CD4-positive, alpha-beta memory T cell (primary cell): ENCODE measurements at regions of chr5 and their contacts with region 1.

Region 1: DNA sequence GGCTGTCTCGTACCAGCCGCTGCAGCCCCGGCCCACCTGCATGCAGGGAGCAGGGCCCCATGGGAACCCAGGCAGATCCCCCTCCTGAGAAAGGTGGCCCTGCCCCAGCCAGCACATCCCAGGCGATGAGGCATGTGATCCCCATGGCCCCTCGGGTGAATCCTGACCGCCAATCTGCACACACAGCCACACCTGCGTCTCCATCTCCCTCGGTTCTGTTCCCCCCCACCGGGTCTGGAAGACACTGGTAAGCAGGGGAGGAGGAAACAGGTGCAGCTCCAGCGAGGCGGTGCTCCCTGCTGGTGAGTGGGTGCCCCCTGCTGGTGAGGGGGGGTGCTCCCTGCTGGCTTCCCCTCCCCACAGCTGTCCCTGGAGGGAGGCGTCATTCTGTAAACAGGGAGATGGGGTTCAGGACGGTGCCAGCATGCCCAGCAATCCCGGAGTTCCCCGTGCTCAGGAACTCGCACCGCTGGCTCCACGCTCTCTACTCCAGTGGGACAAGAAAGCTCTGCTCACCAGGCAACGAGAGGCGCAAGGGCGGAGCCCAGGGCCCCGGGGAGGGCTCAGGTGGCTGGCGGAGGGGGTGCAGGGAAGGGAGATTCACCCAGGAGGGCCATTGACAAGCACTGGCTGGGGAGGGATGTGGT is 28.4 kb upstream of the SLC12A7 start:
- DNase-seq: peak; percentile 69 to 85 (median 77)
- H3K4me3 ChIP-seq: no peak overlapping the region
- H3K4me3 Mint-ChIP-seq: no peak overlapping the region
- H3K27ac ChIP-seq: no peak overlapping the region
- H3K27ac Mint-ChIP-seq: peak overlapping the region in 2 of 7 donors; percentile 13 to 78
- H3K4me1 ChIP-seq: no peaks in the 10 kb centered on the region
- H3K4me1 Mint-ChIP-seq: peaks cover 0 to 7% (median 2%) of the 10 kb centered on the region in 4 donors
- H3K27me3 ChIP-seq: no peaks in the 10 kb centered on the region
- H3K27me3 Mint-ChIP-seq: peaks cover 4 to 7% of the 10 kb centered on the region in 2 donors

Region 2: DNA sequence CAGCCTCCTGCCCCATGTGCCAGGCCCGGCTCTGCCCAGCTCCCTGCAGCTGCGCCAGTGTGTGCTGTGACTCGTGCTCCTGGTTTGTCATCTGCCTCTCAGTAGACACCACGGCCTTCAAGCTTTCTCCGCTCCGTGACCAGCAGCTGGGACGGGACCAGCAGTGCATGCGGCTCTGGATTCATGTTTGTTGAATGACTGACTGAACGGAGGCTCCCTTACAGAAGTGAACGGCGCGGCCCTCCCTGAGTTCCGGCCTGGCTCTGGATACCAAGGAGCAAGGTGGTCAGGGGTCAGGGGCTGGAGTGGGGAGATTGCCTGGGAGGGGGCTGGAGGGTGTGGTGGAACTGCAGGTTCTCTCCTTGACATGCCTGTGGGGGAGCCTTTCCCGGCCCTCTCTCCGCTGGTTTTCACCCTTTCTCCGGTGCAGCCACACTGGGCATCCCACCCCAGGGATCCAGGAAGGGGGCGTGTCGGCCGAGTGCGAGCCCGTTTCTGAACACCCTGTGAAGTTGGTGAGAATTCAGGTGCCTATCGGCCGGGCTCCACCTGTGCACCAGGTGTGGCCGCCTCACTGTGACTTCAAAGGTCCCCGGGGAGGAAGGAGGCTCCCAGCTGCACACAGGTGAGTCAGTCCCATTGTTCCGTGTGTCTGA is 539.3 kb before region 1 on chr5:
- CTCF ChIA-PET with region 1: no interaction called
- POLR2A ChIA-PET with region 1: no interaction called
- intact Hi-C with region 1: no loop called
- DNase-seq: no peak
- H3K4me3 ChIP-seq: no peak overlapping the region
- H3K4me3 Mint-ChIP-seq: no peak overlapping the region
- H3K27ac ChIP-seq: no peak overlapping the region
- H3K27ac Mint-ChIP-seq: no peak overlapping the region
- H3K4me1 ChIP-seq: no peaks in the 10 kb centered on the region
- H3K4me1 Mint-ChIP-seq: peaks cover 5 to 6% (median 5%) of the 10 kb centered on the region in 4 donors
- H3K27me3 ChIP-seq: no peaks in the 10 kb centered on the region
- H3K27me3 Mint-ChIP-seq: peaks cover 10 to 23% of the 10 kb centered on the region in 2 donors

Region 3: GRCh38 chr5:923281-923873 is 216.9 kb before region 1 on chr5:
- CTCF ChIA-PET with region 1: interaction called, 45 read pairs
- POLR2A ChIA-PET with region 1: no interaction called
- intact Hi-C with region 1: no loop called
- DNase-seq: peak in 4 of 5 donors; percentile 47 to 61 (median 58)
- H3K4me3 ChIP-seq: no peak overlapping the region
- H3K4me3 Mint-ChIP-seq: no peak overlapping the region
- H3K27ac ChIP-seq: no peak overlapping the region
- H3K27ac Mint-ChIP-seq: peak overlapping the region in 1 of 7 donors; percentile 24
- H3K4me1 ChIP-seq: no peaks in the 10 kb centered on the region
- H3K4me1 Mint-ChIP-seq: peaks cover 0 to 5% (median 2%) of the 10 kb centered on the region in 4 donors
- H3K27me3 ChIP-seq: peaks cover 4% of the 10 kb centered on the region
- H3K27me3 Mint-ChIP-seq: peaks cover 15 to 26% of the 10 kb centered on the region in 2 donors

Region 4: GRCh38 chr5:989961-990530 is 150.2 kb before region 1 on chr5:
- CTCF ChIA-PET with region 1: interaction called, 13 read pairs
- POLR2A ChIA-PET with region 1: no interaction called
- intact Hi-C with region 1: no loop called
- DNase-seq: no peak
- H3K4me3 ChIP-seq: no peak overlapping the region
- H3K4me3 Mint-ChIP-seq: no peak overlapping the region
- H3K27ac ChIP-seq: no peak overlapping the region
- H3K27ac Mint-ChIP-seq: no peak overlapping the region
- H3K4me1 ChIP-seq: no peaks in the 10 kb centered on the region
- H3K4me1 Mint-ChIP-seq: no peaks in the 10 kb centered on the region
- H3K27me3 ChIP-seq: no peaks in the 10 kb centered on the region
- H3K27me3 Mint-ChIP-seq: peaks cover 26 to 43% of the 10 kb centered on the region in 2 donors